Activated T-helper 1 cell treated with anti-CD3 and anti-CD28 coated beads, Interleukin-12 subunit alpha, Interleukin-12 subunit beta, Interleukin-2, Interleukin-4 antibody, amounts not matched to agents 30 ng/mL and 10 ng/mL and 1 ng/mL, durations not matched to agents 14 hours and 24 hours and 36 hours (primary cell): ENCODE measurements at regions of chr3 and their contacts with region 1.

Region 1: GRCh38 chr3:15601397-15602145 is at the starts of genes BTD and HACL1:
- DNase-seq: peak; percentile 97
- H3K4me3 Mint-ChIP-seq: peak within 1 kb of the TSS; percentile 99
- H3K27ac Mint-ChIP-seq: peak within 1 kb of the TSS; percentile 99
- H3K4me1 Mint-ChIP-seq: peaks cover 51% of the 10 kb centered on the region
- H3K27me3 Mint-ChIP-seq: no peaks in the 10 kb centered on the region
- total RNA-seq, gene BTD: 2.6 and 3.5 TPM in 2 replicates
- total RNA-seq, gene HACL1: 21.4 and 24.8 TPM in 2 replicates

Region 2: GRCh38 chr3:15064835-15065549 is 536.6 kb before region 1 on chr3 and contains the start of gene MRPS25:
- intact Hi-C with region 1: loop called (anchors 1 kb)
- DNase-seq: peak; percentile 90
- H3K4me3 Mint-ChIP-seq: peak within 1 kb of the TSS; percentile 96
- H3K27ac Mint-ChIP-seq: peak within 1 kb of the TSS; percentile 95
- H3K4me1 Mint-ChIP-seq: peaks cover 20% of the 10 kb centered on the region
- H3K27me3 Mint-ChIP-seq: no peaks in the 10 kb centered on the region
- total RNA-seq, gene MRPS25: 96.5 and 105 TPM in 2 replicates

Region 3: DNA sequence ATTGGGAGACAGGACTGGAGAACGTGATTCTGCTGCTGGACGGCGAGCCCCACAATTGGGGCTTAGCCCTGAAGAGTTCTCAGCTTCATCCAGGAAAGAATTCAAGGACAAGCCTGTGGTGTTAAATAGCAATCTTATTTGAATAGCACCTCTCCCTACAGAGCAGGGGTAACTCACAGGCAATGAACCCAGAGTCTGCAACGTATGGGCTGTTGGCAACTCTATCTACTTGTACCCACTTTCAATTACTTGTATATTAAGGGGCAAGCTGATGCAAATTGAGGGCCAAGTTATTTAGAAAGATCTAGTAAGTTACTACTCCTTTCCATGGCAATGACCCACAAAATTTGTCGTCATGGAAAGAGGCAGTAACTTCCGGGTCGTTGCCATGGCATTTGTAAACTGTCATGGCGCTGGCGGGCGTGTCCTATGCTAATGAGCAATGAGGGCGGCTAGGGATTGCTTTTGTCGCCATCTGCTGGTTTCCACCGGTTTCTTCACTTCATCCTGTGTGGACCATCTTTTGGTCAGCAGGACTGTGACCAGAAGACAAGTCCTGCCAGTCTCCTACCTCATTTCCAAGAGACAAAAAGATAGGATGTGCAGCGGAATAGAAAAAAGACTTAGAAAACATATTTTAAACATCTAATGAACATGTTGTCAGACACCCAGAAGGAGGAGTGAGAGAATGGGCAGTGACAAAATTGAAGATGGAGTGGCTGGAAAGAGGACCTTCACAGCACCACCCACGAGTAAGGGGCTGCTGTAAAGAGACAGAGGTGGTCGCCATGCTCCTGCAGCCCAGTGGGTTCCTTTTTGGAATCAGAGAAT is 223.4 kb before region 1 on chr3:
- intact Hi-C with region 1: loop called (anchors 1 kb)
- DNase-seq: peak; percentile 93
- H3K4me3 Mint-ChIP-seq: no peak overlapping the region
- H3K27ac Mint-ChIP-seq: peak overlapping the region; percentile 80
- H3K4me1 Mint-ChIP-seq: peaks cover 20% of the 10 kb centered on the region
- H3K27me3 Mint-ChIP-seq: peaks cover 5% of the 10 kb centered on the region

Region 4: GRCh38 chr3:15527031-15527459 is 74.5 kb before region 1 on chr3:
- intact Hi-C with region 1: no loop called
- DNase-seq: no peak
- H3K4me3 Mint-ChIP-seq: no peak overlapping the region
- H3K27ac Mint-ChIP-seq: no peak overlapping the region
- H3K4me1 Mint-ChIP-seq: peaks cover 25% of the 10 kb centered on the region
- H3K27me3 Mint-ChIP-seq: peaks cover 2% of the 10 kb centered on the region

Region 5: GRCh38 chr3:15629860-15630597 is 28.5 kb after region 1 on chr3:
- intact Hi-C with region 1: loop called (anchors 1 kb)
- DNase-seq: peak; percentile 69
- H3K4me3 Mint-ChIP-seq: peak overlapping the region; percentile 48
- H3K27ac Mint-ChIP-seq: peak overlapping the region; percentile 62
- H3K4me1 Mint-ChIP-seq: peaks cover 49% of the 10 kb centered on the region
- H3K27me3 Mint-ChIP-seq: no peaks in the 10 kb centered on the region

Region 6: GRCh38 chr3:15753056-15753710 is 151.6 kb after region 1 on chr3:
- intact Hi-C with region 1: no loop called
- DNase-seq: no peak
- H3K4me3 Mint-ChIP-seq: no peak overlapping the region
- H3K27ac Mint-ChIP-seq: no peak overlapping the region
- H3K4me1 Mint-ChIP-seq: peaks cover 16% of the 10 kb centered on the region
- H3K27me3 Mint-ChIP-seq: no peaks in the 10 kb centered on the region

Region 7: DNA sequence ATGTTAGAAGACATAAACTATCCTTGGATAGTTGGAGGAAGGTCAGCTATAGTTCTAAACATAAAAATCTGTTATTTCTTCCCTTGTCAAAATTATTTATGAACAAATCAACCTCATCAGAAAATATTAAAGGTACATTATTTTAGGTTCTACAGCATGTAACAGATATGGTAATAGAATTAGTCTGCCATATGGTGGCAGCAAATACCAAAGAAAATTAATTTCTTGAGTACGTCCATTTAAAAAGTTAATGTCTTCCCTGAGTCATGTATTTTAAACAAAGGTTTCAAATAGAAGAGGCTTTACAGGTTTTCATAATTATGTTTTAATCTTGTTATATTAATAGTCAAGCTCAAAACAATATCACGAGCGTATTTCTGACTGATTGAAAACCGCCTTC is 214.1 kb after region 1 on chr3:
- intact Hi-C with region 1: loop called (anchors 1 kb)
- DNase-seq: no peak
- H3K4me3 Mint-ChIP-seq: no peak overlapping the region
- H3K27ac Mint-ChIP-seq: no peak overlapping the region
- H3K4me1 Mint-ChIP-seq: peaks cover 57% of the 10 kb centered on the region
- H3K27me3 Mint-ChIP-seq: no peaks in the 10 kb centered on the region